ENCODE measurements at regions of chr7 and their contacts with region 1.

Region 1: DNA sequence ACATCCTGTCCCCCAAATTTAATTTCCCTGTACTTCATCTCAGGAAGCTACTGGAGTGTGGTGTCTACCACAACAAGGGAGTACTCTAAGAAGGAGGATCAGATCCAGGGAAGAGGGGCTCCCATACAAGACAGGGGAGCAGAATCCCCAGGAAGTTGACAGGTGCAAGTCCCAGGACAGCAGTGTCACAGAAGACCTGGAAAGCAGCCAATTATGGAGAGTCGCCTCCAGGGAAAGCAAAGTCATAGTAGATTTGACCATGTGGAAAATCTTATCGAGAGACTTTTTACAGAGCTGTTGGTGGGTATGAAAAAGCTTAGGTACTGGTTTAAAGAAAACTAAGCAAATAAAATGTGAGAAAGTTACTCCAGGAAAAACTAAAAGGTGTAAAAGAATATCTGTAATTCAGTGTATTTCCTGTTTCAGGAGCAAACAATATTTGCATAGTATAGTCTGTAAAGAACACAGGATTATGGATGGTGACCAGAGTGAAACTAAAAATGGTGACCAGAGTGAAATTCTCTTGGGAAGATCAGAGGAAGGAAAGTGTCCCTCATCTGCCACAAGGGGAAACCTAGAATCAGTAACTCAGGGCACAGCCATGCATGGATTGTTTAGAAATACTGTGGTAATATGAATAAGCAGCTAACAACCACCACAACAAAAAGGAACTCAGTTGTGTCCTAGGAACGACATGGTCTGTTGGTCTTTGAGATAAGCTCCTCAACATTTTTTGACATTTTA is 44.5 kb downstream of the LANCL2 start:
- DNase-seq: peak; percentile 38
- H3K4me3 ChIP-seq: no peak overlapping the region
- H3K27ac ChIP-seq: peak overlapping the region; percentile 47
- H3K4me1 ChIP-seq: no peaks in the 10 kb centered on the region
- H3K27me3 ChIP-seq: no peaks in the 10 kb centered on the region
- CTCF ChIP-seq: no peak

Region 2: GRCh38 chr7:55360486-55360885 is 49.2 kb before region 1 on chr7:
- intact Hi-C with region 1: loop called (anchors 5 kb)
- DNase-seq: no peak
- H3K4me3 ChIP-seq: no peak overlapping the region
- H3K27ac ChIP-seq: no peak overlapping the region
- H3K4me1 ChIP-seq: no peaks in the 10 kb centered on the region
- H3K27me3 ChIP-seq: no peaks in the 10 kb centered on the region
- CTCF ChIP-seq: no peak

Region 3: GRCh38 chr7:55483046-55483445 is 73.4 kb after region 1 on chr7:
- intact Hi-C with region 1: no loop called
- DNase-seq: no peak
- H3K4me3 ChIP-seq: no peak overlapping the region
- H3K27ac ChIP-seq: no peak overlapping the region
- H3K4me1 ChIP-seq: no peaks in the 10 kb centered on the region
- H3K27me3 ChIP-seq: no peaks in the 10 kb centered on the region
- CTCF ChIP-seq: no peak